PC-9 (cell line): ENCODE measurements at regions of chr1 and their contacts with region 1.

Region 1: DNA sequence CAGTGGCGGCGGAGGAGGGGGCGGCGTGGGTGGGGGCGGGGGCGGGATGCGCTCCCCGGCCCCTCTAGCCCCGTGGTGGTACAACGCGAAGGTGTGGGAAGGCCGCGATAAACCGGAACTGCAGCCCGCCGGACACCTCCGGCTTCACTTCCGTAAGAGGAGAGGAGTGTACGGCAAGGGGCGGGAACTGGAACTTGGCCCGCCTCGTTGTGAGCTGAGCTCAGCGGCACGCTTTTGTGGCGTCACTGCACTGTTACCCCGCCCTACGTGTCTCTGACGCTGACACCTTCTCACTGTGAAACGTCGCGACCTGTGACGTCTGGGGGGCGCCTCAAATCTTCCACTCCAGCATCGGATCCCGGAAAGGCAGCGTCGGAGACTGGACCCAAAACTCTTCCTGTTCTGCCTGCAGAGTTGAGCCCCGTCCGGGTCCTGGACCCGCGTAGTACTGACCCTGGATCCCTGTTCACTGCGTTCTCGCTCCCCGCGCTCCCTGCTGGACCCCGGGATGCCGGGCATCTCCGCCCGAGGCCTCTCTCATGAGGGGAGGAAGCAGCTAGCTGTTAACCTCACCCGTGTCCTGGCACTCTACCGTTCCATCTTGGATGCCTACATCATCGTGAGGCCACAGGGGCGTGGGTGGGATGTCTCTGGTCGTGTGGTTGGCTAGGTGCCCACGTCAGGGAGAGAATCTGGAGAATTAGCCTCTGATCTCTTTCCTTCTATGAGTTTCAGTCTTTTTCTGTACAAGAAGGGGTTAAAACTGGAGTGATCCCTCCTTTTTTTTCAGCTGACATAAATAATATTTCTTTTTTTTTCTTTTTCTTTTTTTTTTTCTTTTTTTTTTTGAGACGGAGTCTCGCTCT is at the start of gene ISG20L2:
- DNase-seq: peak; percentile 93 to 94
- H3K4me3 ChIP-seq: peak within 1 kb of the TSS; percentile 90
- H3K27ac ChIP-seq: peak within 1 kb of the TSS; percentile 46
- H3K4me1 ChIP-seq: peaks cover 30% of the 10 kb centered on the region
- H3K27me3 ChIP-seq: no peaks in the 10 kb centered on the region
- CTCF ChIP-seq: no peak
- total RNA-seq, gene ISG20L2: 25.4 and 33.2 TPM in 2 replicates

Region 2: GRCh38 chr1:156659994-156660751 is 68.7 kb before region 1 on chr1:
- CTCF ChIA-PET with region 1: interaction called, 7 read pairs
- POLR2A ChIA-PET with region 1: interaction called, 5 read pairs
- intact Hi-C with region 1: loop called (anchors 1 kb)
- DNase-seq: peak; percentile 90 to 97
- H3K4me3 ChIP-seq: peak overlapping the region; percentile 73
- H3K27ac ChIP-seq: peak overlapping the region; percentile 86
- H3K4me1 ChIP-seq: peaks cover 25% of the 10 kb centered on the region
- H3K27me3 ChIP-seq: no peaks in the 10 kb centered on the region
- CTCF ChIP-seq: peak; percentile 98

Region 3: DNA sequence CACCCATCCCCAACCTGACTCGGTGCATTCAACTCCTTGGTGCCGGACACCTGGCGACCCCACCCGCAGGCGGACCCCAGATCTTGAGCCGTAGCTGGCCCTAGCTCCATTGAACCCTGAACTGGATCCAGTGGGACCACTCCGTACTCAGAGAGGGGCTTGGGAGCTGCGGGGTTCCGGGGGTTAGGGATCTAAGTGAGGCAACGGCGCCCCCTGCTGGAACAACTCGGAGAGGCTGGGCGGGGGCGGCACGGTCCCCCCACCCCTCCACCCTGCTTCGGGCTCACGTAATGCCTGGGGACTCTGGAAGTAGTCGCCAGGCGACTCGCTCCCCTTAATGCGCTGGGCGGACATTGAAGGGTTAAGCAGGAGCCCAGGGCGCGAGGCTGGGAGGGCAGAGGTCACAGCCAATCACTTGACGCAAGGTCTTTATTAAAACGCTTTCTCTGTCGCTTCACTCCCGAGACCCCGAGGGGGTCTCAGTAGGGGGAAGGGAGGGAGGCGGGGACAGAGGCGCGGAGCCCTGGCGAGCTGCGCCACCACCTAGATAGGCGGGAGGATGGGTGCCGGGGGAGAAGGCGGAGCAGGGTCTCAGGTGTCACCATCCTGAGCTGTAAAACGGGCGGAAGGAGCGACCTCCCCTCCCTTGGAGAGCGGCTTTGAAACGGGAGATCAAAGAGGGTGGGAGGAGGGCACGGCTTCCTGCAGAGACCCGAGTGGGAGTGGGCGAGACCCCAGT is 22.7 kb before region 1 on chr1:
- CTCF ChIA-PET with region 1: interaction called, 21 read pairs
- POLR2A ChIA-PET with region 1: interaction called, 18 read pairs
- intact Hi-C with region 1: loop called (anchors 1 kb)
- DNase-seq: peak in 1 of 2 experiments; percentile 86
- H3K4me3 ChIP-seq: peak overlapping the region; percentile 79
- H3K27ac ChIP-seq: 0 out of 2 replicates have a peak overlapping the region, but pooled peaks have one; percentile 55
- H3K4me1 ChIP-seq: peaks cover 47% of the 10 kb centered on the region
- H3K27me3 ChIP-seq: no peaks in the 10 kb centered on the region
- CTCF ChIP-seq: peak; percentile 98

Region 4: DNA sequence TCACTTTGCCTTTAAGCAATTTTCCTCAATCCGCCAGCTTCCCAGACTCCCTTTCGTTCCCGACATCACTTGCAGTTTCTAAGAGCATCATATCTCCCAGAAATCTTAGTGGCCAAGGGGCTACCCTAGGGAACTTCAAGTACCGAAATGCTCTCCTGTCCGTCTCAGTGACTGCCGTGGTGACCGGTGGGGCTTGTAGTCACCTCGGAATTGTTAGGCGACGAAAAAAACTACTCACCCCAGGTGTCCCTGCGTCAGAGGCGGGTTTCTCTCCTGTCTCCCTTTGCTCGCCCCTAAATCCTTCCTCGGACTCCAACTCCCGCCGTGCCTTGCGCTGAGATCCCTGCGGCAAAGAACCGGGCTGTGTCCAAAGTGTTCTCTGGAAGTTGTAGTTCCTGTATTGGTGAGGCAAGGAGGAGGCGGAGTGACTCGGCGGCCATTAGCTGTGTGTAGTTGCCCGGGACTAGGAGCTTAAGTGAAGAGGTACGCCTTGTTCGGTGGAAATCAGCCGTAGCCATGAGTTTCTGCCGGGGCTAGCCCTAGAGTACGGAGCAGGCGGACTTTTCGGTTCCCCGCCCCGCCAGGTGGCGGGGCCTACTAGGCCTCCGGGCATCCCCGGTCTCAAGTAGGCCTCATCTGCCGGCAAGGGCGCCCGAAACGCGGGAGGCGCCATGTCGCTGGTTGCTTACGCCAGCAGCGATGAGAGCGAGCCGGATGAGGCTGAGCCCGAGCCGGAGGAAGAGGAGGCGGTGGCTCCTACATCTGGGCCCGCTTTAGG is 38.5 kb after region 1 on chr1 and contains the start of gene PRCC:
- CTCF ChIA-PET with region 1: interaction called, 5 read pairs
- POLR2A ChIA-PET with region 1: interaction called, 5 read pairs
- intact Hi-C with region 1: loop called (anchors 1 kb)
- DNase-seq: peak; percentile 96 to 99
- H3K4me3 ChIP-seq: peak within 1 kb of the TSS; percentile 96
- H3K27ac ChIP-seq: peak within 1 kb of the TSS; percentile 76
- H3K4me1 ChIP-seq: peaks cover 18% of the 10 kb centered on the region
- H3K27me3 ChIP-seq: no peaks in the 10 kb centered on the region
- CTCF ChIP-seq: no peak
- total RNA-seq, gene PRCC: 47.8 and 56.6 TPM in 2 replicates

Region 5: DNA sequence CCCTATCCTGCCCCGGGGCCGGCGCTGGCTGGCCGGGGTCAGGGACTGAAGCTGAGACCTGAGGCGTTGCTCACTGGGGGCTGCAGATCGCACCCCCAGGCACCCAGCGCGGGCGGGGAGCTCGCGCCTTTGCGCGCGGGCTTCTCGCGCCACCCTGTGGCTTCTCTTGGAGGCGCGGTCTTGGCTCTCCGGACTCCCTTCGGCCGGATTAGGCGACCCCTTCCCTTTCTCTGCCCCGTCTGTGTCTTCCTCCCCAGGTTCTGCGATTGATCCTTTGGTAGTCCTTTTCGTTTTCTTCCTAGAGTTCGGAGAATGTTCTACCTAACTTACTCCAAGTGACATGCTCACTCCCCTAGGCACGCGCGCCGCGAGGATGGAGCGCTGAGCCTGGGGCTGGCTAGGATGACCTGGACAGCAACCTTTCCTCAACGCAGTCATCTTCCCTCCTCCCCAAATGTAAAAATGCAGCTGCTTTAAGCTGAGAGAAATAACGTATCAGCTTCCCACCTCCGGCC is 131.3 kb after region 1 on chr1:
- CTCF ChIA-PET with region 1: interaction called, 25 read pairs
- POLR2A ChIA-PET with region 1: interaction called, 7 read pairs
- intact Hi-C with region 1: loop called (anchors 1 kb)
- DNase-seq: peak in 1 of 2 experiments; percentile 49
- H3K4me3 ChIP-seq: peak overlapping the region; percentile 40; the same call in 1 of the 2 replicates
- H3K27ac ChIP-seq: no peak overlapping the region
- H3K4me1 ChIP-seq: peaks cover 12% of the 10 kb centered on the region
- H3K27me3 ChIP-seq: peaks cover 58% of the 10 kb centered on the region
- CTCF ChIP-seq: peak; percentile 80

Region 6: GRCh38 chr1:156927215-156928042 is 198.6 kb after region 1 on chr1:
- CTCF ChIA-PET with region 1: interaction called, 9 read pairs
- POLR2A ChIA-PET with region 1: no interaction called
- intact Hi-C with region 1: loop called (anchors 1 kb)
- DNase-seq: peak; percentile 68 to 79
- H3K4me3 ChIP-seq: peak overlapping the region; percentile 64
- H3K27ac ChIP-seq: no peak overlapping the region
- H3K4me1 ChIP-seq: peaks cover 30% of the 10 kb centered on the region
- H3K27me3 ChIP-seq: no peaks in the 10 kb centered on the region
- CTCF ChIP-seq: peak; percentile 77

Region 7: DNA sequence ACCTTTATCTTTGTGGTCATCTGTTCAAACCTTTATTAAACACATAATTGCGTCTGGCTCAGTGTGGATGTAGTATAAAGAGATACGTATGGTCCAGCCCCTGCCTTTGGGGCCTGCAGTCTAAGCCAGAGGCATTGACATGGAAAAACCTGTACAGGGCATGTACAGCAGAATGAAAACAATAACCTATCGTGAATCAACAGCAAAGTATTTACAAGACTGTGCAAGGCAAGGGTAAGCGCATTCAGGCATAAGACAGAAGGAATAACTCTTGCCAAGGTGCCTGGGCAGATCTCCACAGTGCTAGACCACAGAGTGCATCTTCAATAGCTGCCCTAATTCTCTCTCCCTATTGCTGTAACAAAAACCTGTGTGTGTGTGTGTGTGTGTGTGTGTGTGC is 1300.1 kb after region 1 on chr1:
- CTCF ChIA-PET with region 1: no interaction called
- POLR2A ChIA-PET with region 1: no interaction called
- intact Hi-C with region 1: no loop called
- DNase-seq: peak; percentile 25 to 84
- H3K4me3 ChIP-seq: no peak overlapping the region
- H3K27ac ChIP-seq: no peak overlapping the region
- H3K4me1 ChIP-seq: peaks cover 36% of the 10 kb centered on the region
- H3K27me3 ChIP-seq: no peaks in the 10 kb centered on the region
- CTCF ChIP-seq: no peak